PC-3 (cell line): ENCODE measurements at regions of chr6 and their contacts with region 1.

Region 1: GRCh38 chr6:73129653-73130443 is 95.4 kb downstream of the KHDC1L start:
- DNase-seq: peak; percentile 87
- ATAC-seq: peak; percentile 93
- H3K4me3 ChIP-seq: 0 out of 2 replicates have a peak overlapping the region, but pooled peaks have one; percentile 5
- H3K27ac ChIP-seq: no peak overlapping the region
- H3K4me1 ChIP-seq: peaks cover 9% of the 10 kb centered on the region; the same call in 1 of the 2 replicates
- H3K27me3 ChIP-seq: no peaks in the 10 kb centered on the region
- CTCF ChIP-seq: peak; percentile 95

Region 2: GRCh38 chr6:72619883-72620696 is 509.8 kb before region 1 on chr6:
- CTCF ChIA-PET with region 1: interaction called, 5 read pairs
- POLR2A ChIA-PET with region 1: no interaction called
- intact Hi-C with region 1: loop called (anchors 1 kb)
- DNase-seq: no peak
- ATAC-seq: no peak
- H3K4me3 ChIP-seq: no peak overlapping the region
- H3K27ac ChIP-seq: no peak overlapping the region
- H3K4me1 ChIP-seq: no peaks in the 10 kb centered on the region; the same call in 1 of the 2 replicates
- H3K27me3 ChIP-seq: no peaks in the 10 kb centered on the region
- CTCF ChIP-seq: no peak

Region 3: GRCh38 chr6:72968704-72969103 is 161.1 kb before region 1 on chr6:
- CTCF ChIA-PET with region 1: interaction called, 3 read pairs
- POLR2A ChIA-PET with region 1: no interaction called
- intact Hi-C with region 1: loop called (anchors 5 kb)
- DNase-seq: peak; percentile 90
- ATAC-seq: peak; percentile 79
- H3K4me3 ChIP-seq: no peak overlapping the region
- H3K27ac ChIP-seq: peak overlapping the region; percentile 56
- H3K4me1 ChIP-seq: peaks cover 42% of the 10 kb centered on the region
- H3K27me3 ChIP-seq: no peaks in the 10 kb centered on the region
- CTCF ChIP-seq: no peak

Region 4: GRCh38 chr6:73032586-73032985 is 97.3 kb before region 1 on chr6:
- CTCF ChIA-PET with region 1: interaction called, 3 read pairs
- POLR2A ChIA-PET with region 1: no interaction called
- intact Hi-C with region 1: loop called (anchors 5 kb)
- DNase-seq: peak; percentile 85
- ATAC-seq: peak; percentile 35
- H3K4me3 ChIP-seq: no peak overlapping the region
- H3K27ac ChIP-seq: peak overlapping the region; percentile 99
- H3K4me1 ChIP-seq: peaks cover 56% of the 10 kb centered on the region
- H3K27me3 ChIP-seq: no peaks in the 10 kb centered on the region
- CTCF ChIP-seq: no peak

Region 5: GRCh38 chr6:73169111-73169510 is 39.3 kb after region 1 on chr6:
- CTCF ChIA-PET with region 1: no interaction called
- POLR2A ChIA-PET with region 1: no interaction called
- intact Hi-C with region 1: no loop called
- DNase-seq: no peak
- ATAC-seq: no peak
- H3K4me3 ChIP-seq: no peak overlapping the region
- H3K27ac ChIP-seq: no peak overlapping the region
- H3K4me1 ChIP-seq: no peaks in the 10 kb centered on the region
- H3K27me3 ChIP-seq: no peaks in the 10 kb centered on the region
- CTCF ChIP-seq: no peak

Region 6: DNA sequence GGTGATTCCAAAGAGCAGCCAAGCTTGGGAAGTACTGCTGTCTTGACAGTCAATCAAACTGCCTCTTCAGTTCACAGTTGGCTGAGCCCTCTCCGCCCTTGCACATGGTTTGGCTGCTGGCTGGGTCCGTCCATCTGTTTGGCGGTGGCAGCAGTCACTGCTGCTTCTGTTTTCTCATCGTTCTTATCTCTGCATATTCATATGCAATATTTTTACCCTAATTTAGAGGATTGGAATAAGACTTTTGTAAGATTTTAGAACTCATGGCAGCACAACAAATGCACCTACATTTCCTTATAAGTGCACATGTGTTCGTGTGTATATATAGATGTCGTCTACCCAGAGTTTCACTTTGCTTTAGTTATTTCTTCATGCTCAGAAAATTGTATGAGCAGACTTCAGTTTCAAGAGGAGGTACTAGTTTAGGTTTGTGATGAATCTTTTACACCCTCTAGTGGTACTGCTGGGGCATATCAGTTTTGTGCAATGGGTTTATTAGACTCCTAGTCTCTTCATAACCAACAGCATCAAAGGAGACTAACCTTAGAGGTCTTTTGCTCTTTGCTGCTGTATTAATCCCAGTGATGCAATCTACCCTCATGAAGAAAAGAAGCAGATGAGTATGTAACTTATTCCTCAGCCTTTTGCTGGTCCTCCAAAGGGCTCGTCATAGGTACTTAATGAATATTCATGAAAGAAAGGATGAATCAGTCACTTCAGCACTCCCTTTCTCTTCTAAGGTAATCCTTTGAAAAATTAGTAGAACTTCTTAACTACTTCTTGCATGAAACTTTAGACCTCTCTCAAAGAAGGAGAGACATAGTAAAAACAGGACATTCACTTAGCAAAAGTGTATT is 51.1 kb after region 1 on chr6:
- CTCF ChIA-PET with region 1: no interaction called
- POLR2A ChIA-PET with region 1: no interaction called
- intact Hi-C with region 1: loop called (anchors 2 kb)
- DNase-seq: peak; percentile 76
- ATAC-seq: peak; percentile 91
- H3K4me3 ChIP-seq: peak overlapping the region; percentile 66
- H3K27ac ChIP-seq: no peak overlapping the region
- H3K4me1 ChIP-seq: peaks cover 6% of the 10 kb centered on the region; the same call in 1 of the 2 replicates
- H3K27me3 ChIP-seq: no peaks in the 10 kb centered on the region
- CTCF ChIP-seq: peak; percentile 86